CD8-positive, alpha-beta T cell (primary cell): ENCODE measurements at regions of chr11 and their contacts with region 1.

Region 1: GRCh38 chr11:59767225-59767611 is 12.0 kb downstream of the STX3 start:
- DNase-seq: peak in 3 of 9 experiments; percentile 19 to 45 (median 37)
- ATAC-seq: peak; percentile 46
- H3K4me3 ChIP-seq: no peak overlapping the region
- H3K4me3 Mint-ChIP-seq: peak overlapping the region; percentile 12
- H3K27ac ChIP-seq: no peak overlapping the region
- H3K27ac Mint-ChIP-seq: peak overlapping the region; percentile 52
- H3K4me1 ChIP-seq: peaks cover 26% of the 10 kb centered on the region
- H3K4me1 Mint-ChIP-seq: peaks cover 20% of the 10 kb centered on the region
- H3K27me3 ChIP-seq: no peaks in the 10 kb centered on the region
- H3K27me3 Mint-ChIP-seq: no peaks in the 10 kb centered on the region
- CTCF ChIP-seq: no peak

Region 2: GRCh38 chr11:59448484-59448883 is 318.7 kb before region 1 on chr11:
- CTCF ChIA-PET with region 1: no interaction called
- POLR2A ChIA-PET with region 1: no interaction called
- intact Hi-C with region 1: no loop called
- DNase-seq: no peak
- ATAC-seq: no peak
- H3K4me3 ChIP-seq: no peak overlapping the region
- H3K4me3 Mint-ChIP-seq: no peak overlapping the region
- H3K27ac ChIP-seq: no peak overlapping the region
- H3K27ac Mint-ChIP-seq: no peak overlapping the region
- H3K4me1 ChIP-seq: no peaks in the 10 kb centered on the region
- H3K4me1 Mint-ChIP-seq: no peaks in the 10 kb centered on the region
- H3K27me3 ChIP-seq: no peaks in the 10 kb centered on the region
- H3K27me3 Mint-ChIP-seq: peaks cover 4% of the 10 kb centered on the region
- CTCF ChIP-seq: no peak

Region 3: DNA sequence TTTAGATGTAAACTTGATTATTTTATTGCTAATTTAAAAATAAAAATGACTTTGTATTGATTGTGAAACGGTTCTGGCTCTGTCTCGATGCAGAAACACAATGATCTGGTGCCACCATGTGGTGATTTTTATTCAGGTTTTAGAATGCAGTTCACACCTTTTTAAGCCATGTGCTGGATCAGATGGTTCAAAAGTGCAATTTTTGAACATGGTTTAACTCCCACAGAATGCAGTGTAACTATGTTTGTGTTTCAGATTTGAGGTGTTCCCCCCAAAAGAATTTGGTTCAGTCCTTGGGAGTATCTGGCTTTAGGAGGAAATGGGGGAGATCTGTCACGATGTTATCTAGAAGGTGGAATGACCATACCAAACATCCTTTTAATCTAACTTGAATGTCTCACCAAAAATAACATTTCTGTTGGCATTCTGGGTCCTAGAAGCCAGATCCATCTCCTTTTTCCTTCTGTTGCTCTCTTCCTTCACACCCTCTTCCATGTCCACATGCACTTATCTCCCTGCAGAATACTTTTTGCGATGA is 35.5 kb after region 1 on chr11:
- CTCF ChIA-PET with region 1: interaction called, 15 read pairs
- POLR2A ChIA-PET with region 1: no interaction called
- intact Hi-C with region 1: no loop called
- DNase-seq: peak in 6 of 9 experiments; percentile 26 to 78 (median 42)
- ATAC-seq: peak; percentile 70
- H3K4me3 ChIP-seq: no peak overlapping the region
- H3K4me3 Mint-ChIP-seq: no peak overlapping the region
- H3K27ac ChIP-seq: no peak overlapping the region
- H3K27ac Mint-ChIP-seq: no peak overlapping the region
- H3K4me1 ChIP-seq: no peaks in the 10 kb centered on the region
- H3K4me1 Mint-ChIP-seq: no peaks in the 10 kb centered on the region
- H3K27me3 ChIP-seq: no peaks in the 10 kb centered on the region
- H3K27me3 Mint-ChIP-seq: no peaks in the 10 kb centered on the region
- CTCF ChIP-seq: peak; percentile 72

Region 4: GRCh38 chr11:60069450-60069849 is 302.2 kb after region 1 on chr11:
- CTCF ChIA-PET with region 1: no interaction called
- POLR2A ChIA-PET with region 1: no interaction called
- intact Hi-C with region 1: no loop called
- DNase-seq: no peak
- ATAC-seq: no peak
- H3K4me3 ChIP-seq: no peak overlapping the region
- H3K4me3 Mint-ChIP-seq: no peak overlapping the region
- H3K27ac ChIP-seq: no peak overlapping the region
- H3K27ac Mint-ChIP-seq: no peak overlapping the region
- H3K4me1 ChIP-seq: no peaks in the 10 kb centered on the region
- H3K4me1 Mint-ChIP-seq: no peaks in the 10 kb centered on the region
- H3K27me3 ChIP-seq: no peaks in the 10 kb centered on the region
- H3K27me3 Mint-ChIP-seq: peaks cover 11% of the 10 kb centered on the region
- CTCF ChIP-seq: no peak